Calu3 (cell line): ENCODE measurements at regions of chr2 and their contacts with region 1.

Region 1: DNA sequence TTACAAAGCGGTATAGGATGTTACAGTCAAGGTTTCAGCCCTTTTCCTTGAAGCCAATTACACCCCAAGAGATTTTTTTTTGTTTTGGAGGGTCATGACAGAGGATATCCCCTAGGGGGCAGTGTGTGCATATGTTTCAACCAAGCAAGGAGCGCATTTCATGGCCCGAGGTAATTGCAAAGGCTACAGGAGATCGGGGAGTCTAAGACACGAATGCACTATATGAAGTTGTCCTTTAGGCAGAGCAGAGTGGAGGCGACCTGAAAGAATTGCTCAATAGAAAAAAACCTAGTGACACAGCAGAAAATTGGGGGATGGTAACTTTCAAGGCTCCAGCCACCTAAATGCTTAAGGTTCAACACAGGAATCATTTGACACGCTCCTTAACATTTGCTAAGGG is 219.8 kb upstream of the PARD3B start:
- DNase-seq: peak; percentile 74
- H3K4me3 Mint-ChIP-seq: no peak overlapping the region
- H3K27ac Mint-ChIP-seq: no peak overlapping the region
- H3K4me1 Mint-ChIP-seq: peaks cover 22% of the 10 kb centered on the region
- H3K27me3 Mint-ChIP-seq: no peaks in the 10 kb centered on the region
- CTCF ChIP-seq: peak; percentile 92

Region 2: GRCh38 chr2:204260162-204260877 is 65.1 kb before region 1 on chr2:
- CTCF ChIA-PET with region 1: interaction called, 3 read pairs
- intact Hi-C with region 1: loop called (anchors 2 kb)
- DNase-seq: peak; percentile 66
- H3K4me3 Mint-ChIP-seq: no peak overlapping the region
- H3K27ac Mint-ChIP-seq: no peak overlapping the region
- H3K4me1 Mint-ChIP-seq: peaks cover 23% of the 10 kb centered on the region
- H3K27me3 Mint-ChIP-seq: no peaks in the 10 kb centered on the region
- CTCF ChIP-seq: peak; percentile 88

Region 3: GRCh38 chr2:204386668-204387067 is 61.2 kb after region 1 on chr2:
- CTCF ChIA-PET with region 1: no interaction called
- intact Hi-C with region 1: no loop called
- DNase-seq: no peak
- H3K4me3 Mint-ChIP-seq: no peak overlapping the region
- H3K27ac Mint-ChIP-seq: no peak overlapping the region
- H3K4me1 Mint-ChIP-seq: no peaks in the 10 kb centered on the region
- H3K27me3 Mint-ChIP-seq: peaks cover 13% of the 10 kb centered on the region
- CTCF ChIP-seq: no peak

Region 4: GRCh38 chr2:204538182-204539018 is 212.9 kb after region 1 on chr2:
- CTCF ChIA-PET with region 1: no interaction called
- intact Hi-C with region 1: loop called (anchors 5 kb)
- DNase-seq: no peak
- H3K4me3 Mint-ChIP-seq: no peak overlapping the region
- H3K27ac Mint-ChIP-seq: no peak overlapping the region
- H3K4me1 Mint-ChIP-seq: peaks cover 23% of the 10 kb centered on the region
- H3K27me3 Mint-ChIP-seq: no peaks in the 10 kb centered on the region
- CTCF ChIP-seq: no peak

Region 5: GRCh38 chr2:204625167-204625566 is 299.7 kb after region 1 on chr2:
- CTCF ChIA-PET with region 1: no interaction called
- intact Hi-C with region 1: loop called (anchors 1 kb)
- DNase-seq: peak; percentile 24
- H3K4me3 Mint-ChIP-seq: no peak overlapping the region
- H3K27ac Mint-ChIP-seq: no peak overlapping the region
- H3K4me1 Mint-ChIP-seq: no peaks in the 10 kb centered on the region
- H3K27me3 Mint-ChIP-seq: no peaks in the 10 kb centered on the region
- CTCF ChIP-seq: peak; percentile 19

Region 6: GRCh38 chr2:204691911-204692510 is 366.5 kb after region 1 on chr2:
- CTCF ChIA-PET with region 1: interaction called, 4 read pairs
- intact Hi-C with region 1: loop called (anchors 1 kb)
- DNase-seq: peak; percentile 63
- H3K4me3 Mint-ChIP-seq: no peak overlapping the region
- H3K27ac Mint-ChIP-seq: no peak overlapping the region
- H3K4me1 Mint-ChIP-seq: peaks cover 8% of the 10 kb centered on the region
- H3K27me3 Mint-ChIP-seq: no peaks in the 10 kb centered on the region
- CTCF ChIP-seq: peak; percentile 57